A673 (cell line): ENCODE measurements at regions of chr3 and their contacts with region 1.

Region 1: GRCh38 chr3:99172736-99173657 is 271.5 kb upstream of the DCBLD2 start:
- DNase-seq: peak; percentile 84
- H3K4me3 ChIP-seq: no peak overlapping the region
- H3K27ac ChIP-seq: no peak overlapping the region
- H3K4me1 ChIP-seq: peaks cover 21% of the 10 kb centered on the region
- H3K27me3 ChIP-seq: no peaks in the 10 kb centered on the region
- CTCF ChIP-seq: peak; percentile 86

Region 2: GRCh38 chr3:98824256-98824655 is 348.7 kb before region 1 on chr3:
- CTCF ChIA-PET with region 1: no interaction called
- POLR2A ChIA-PET with region 1: no interaction called
- intact Hi-C with region 1: loop called (anchors 5 kb)
- DNase-seq: peak; percentile 67
- H3K4me3 ChIP-seq: no peak overlapping the region
- H3K27ac ChIP-seq: no peak overlapping the region
- H3K4me1 ChIP-seq: peaks cover 16% of the 10 kb centered on the region
- H3K27me3 ChIP-seq: no peaks in the 10 kb centered on the region
- CTCF ChIP-seq: peak; percentile 52

Region 3: GRCh38 chr3:98901392-98902350 is 271.3 kb before region 1 on chr3 and contains the start of gene DCBLD2:
- CTCF ChIA-PET with region 1: no interaction called
- POLR2A ChIA-PET with region 1: no interaction called
- intact Hi-C with region 1: loop called (anchors 5 kb)
- DNase-seq: peak; percentile 100
- H3K4me3 ChIP-seq: peak within 1 kb of the TSS; percentile 72
- H3K27ac ChIP-seq: peak within 1 kb of the TSS; percentile 85
- H3K4me1 ChIP-seq: peaks cover 7% of the 10 kb centered on the region
- H3K27me3 ChIP-seq: no peaks in the 10 kb centered on the region
- CTCF ChIP-seq: no peak
- total RNA-seq, gene DCBLD2: 29.9 and 33.6 TPM in 2 replicates

Region 4: DNA sequence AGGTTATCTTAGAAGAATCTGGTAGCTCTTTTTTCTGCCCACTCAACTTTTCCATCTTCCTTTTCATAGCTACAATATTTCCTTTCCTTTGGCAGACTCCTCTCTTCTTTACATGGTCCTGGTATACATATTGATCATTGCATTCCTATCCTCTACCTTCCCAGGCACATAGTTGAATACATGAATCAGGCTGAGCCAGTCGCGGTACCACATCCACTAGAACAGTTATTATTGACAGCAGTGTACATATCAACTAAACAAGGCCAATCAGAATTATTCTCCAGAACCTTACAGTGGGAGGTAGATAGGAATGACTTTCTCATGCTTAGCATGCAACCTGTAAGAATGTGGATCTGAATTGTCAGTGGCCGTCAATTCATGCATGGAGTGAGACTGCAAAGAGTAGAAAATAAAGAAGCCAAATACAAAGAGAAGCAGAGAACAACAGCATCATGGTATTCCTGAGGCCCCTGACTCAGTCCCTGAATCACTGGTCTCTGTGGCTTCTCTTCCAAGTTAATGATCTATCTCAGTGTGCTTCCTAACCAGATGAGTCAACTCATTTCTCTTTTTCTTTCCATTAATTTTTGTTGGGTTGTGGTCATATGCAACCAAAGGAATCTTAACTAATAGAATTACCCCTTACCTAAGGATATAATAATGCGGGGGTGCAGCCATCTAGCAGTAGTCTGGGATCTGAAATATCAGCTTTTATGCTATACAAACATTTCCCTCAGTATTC is 210.6 kb before region 1 on chr3:
- CTCF ChIA-PET with region 1: no interaction called
- POLR2A ChIA-PET with region 1: no interaction called
- intact Hi-C with region 1: no loop called
- DNase-seq: no peak
- H3K4me3 ChIP-seq: no peak overlapping the region
- H3K27ac ChIP-seq: no peak overlapping the region
- H3K4me1 ChIP-seq: no peaks in the 10 kb centered on the region
- H3K27me3 ChIP-seq: no peaks in the 10 kb centered on the region
- CTCF ChIP-seq: no peak

Region 5: DNA sequence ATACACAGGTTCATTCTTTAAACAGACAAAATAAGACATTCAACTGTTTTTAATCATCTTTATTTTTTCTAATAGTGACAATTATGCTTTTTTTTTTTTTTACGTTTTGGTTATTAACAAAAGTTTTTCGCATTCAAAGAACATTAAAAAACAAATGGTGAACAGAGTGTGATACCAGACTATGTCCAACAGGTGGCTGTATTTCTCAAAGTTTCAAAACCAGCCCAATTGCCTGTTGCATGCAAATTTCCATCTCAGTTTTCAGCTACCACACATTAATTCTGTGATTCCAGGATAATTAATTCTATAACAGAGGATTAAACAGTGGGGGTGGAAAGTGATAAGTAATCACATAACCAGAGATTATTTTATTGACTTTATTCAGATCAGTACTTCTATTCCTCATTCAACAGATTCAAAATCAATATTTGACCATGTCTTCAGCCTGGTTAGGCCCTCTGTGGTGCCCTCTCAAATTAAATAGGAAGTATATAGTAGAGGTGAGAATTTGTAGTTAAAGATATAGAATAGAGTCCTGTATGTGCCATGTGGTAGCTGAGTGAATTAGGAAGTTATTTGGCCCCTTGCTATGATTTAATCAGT is 149.3 kb before region 1 on chr3:
- CTCF ChIA-PET with region 1: interaction called, 11 read pairs
- POLR2A ChIA-PET with region 1: no interaction called
- intact Hi-C with region 1: loop called (anchors 2 kb)
- DNase-seq: peak; percentile 74
- H3K4me3 ChIP-seq: no peak overlapping the region
- H3K27ac ChIP-seq: no peak overlapping the region
- H3K4me1 ChIP-seq: no peaks in the 10 kb centered on the region
- H3K27me3 ChIP-seq: no peaks in the 10 kb centered on the region
- CTCF ChIP-seq: peak; percentile 80

Region 6: GRCh38 chr3:99186016-99186415 is 13.0 kb after region 1 on chr3:
- CTCF ChIA-PET with region 1: no interaction called
- POLR2A ChIA-PET with region 1: no interaction called
- intact Hi-C with region 1: loop called (anchors 1 kb)
- DNase-seq: no peak
- H3K4me3 ChIP-seq: no peak overlapping the region
- H3K27ac ChIP-seq: no peak overlapping the region
- H3K4me1 ChIP-seq: no peaks in the 10 kb centered on the region
- H3K27me3 ChIP-seq: no peaks in the 10 kb centered on the region
- CTCF ChIP-seq: no peak

Region 7: GRCh38 chr3:99532246-99532645 is 359.2 kb after region 1 on chr3:
- CTCF ChIA-PET with region 1: no interaction called
- POLR2A ChIA-PET with region 1: no interaction called
- intact Hi-C with region 1: loop called (anchors 2 kb)
- DNase-seq: peak; percentile 88
- H3K4me3 ChIP-seq: no peak overlapping the region
- H3K27ac ChIP-seq: no peak overlapping the region
- H3K4me1 ChIP-seq: peaks cover 8% of the 10 kb centered on the region
- H3K27me3 ChIP-seq: no peaks in the 10 kb centered on the region
- CTCF ChIP-seq: peak; percentile 82